Heart left ventricle (tissue), 16 donors: ENCODE measurements at regions of chr20 and their contacts with region 1.

Region 1: DNA sequence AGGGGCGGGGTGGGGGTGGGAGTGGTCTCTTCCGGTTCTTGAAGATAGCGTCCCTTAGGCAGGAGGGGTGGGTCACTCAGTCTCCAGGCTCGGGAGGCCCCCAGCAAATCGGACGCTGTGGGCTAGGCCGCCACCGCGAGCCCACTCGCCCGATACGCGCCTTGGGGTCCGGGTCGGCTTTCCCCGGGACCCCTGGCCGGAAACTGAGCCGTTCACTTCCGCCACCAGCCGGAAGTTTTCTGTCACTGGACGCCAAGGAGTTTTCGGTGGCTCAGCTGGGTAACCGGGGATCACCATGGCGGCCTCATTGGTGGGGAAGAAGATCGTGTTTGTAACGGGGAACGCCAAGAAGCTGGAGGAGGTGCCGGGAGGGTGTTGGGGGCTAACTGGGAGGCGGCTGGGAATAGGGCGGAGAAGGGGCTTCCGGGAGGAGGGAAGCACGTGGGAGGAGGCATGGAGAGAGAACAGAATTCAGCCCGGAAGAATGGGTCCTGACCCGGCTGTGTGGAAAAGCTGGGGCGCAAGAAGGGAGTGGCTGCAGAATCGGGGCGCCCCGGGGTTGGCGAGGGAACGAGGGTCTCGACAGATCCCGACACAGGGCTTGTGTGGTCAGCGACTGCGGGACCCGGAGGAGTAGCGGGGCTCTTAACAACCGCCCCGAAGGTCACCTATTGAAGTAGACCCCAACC is at the start of gene ITPA:
- DNase-seq: peak in 4 of 5 donors; percentile 45 to 57 (median 52)
- ATAC-seq: peak; percentile 18 to 67 (median 61)
- H3K4me3 ChIP-seq: peak within 1 kb of the TSS; percentile 74 to 95 (median 85)
- H3K27ac ChIP-seq: peak within 1 kb of the TSS; percentile 45 to 94 (median 84)
- H3K4me1 ChIP-seq: peaks cover 0 to 21% (median 9%) of the 10 kb centered on the region in 12 donors
- H3K27me3 ChIP-seq: no peaks in the 10 kb centered on the region
- CTCF ChIP-seq: peak in 1 of 12 donors; percentile 8
- POLR2A ChIP-seq: peak in 1 of 2 donors; percentile 31
- total RNA-seq, gene ITPA: 15.3 to 37.8 (median 20.6) TPM

Region 2: DNA sequence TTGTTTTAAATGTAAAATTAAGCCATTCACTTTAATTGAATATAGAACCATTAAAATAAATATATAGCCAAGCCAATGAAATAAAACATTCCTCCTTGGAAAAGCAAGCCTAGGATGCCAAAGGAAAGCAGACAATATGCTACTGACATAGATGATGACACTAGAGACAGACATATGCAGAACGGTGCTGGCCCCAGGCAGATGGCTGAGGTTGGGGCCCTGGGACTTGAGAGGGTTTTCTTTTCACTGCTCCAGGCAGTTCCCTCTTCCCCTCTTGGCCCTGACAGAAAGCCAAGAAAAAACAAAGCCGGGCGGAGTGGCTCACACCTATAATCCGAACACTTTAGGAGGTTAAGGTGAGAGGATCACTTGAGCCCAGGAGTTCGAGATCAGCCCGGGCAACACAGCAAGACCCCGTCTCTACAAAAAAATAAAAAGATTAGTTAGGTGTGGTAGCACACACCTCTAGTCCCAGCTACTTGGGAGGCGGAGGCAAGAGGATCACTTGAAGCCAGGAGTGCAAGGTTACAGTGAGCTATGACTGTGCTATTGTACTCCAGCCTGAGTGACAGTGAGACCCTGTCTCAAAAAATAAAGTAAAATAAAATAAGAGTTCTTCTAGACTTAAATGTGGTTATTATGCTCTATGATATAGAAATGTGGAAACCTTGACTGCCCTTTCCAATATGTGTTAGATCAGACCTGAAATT is 81.0 kb before region 1 on chr20:
- intact Hi-C with region 1: no loop called
- DNase-seq: no peak
- ATAC-seq: no peak
- H3K4me3 ChIP-seq: no peak overlapping the region
- H3K27ac ChIP-seq: no peak overlapping the region
- H3K4me1 ChIP-seq: peaks cover 0 to 15% (median 3%) of the 10 kb centered on the region in 12 donors
- H3K27me3 ChIP-seq: no peaks in the 10 kb centered on the region
- CTCF ChIP-seq: no peak
- POLR2A ChIP-seq: no peak

Region 3: GRCh38 chr20:3156811-3157619 is 52.4 kb before region 1 on chr20:
- intact Hi-C with region 1: no loop called
- DNase-seq: no peak
- ATAC-seq: no peak
- H3K4me3 ChIP-seq: peak overlapping the region in 2 of 12 donors; percentile 70 to 94
- H3K27ac ChIP-seq: peak overlapping the region in 2 of 12 donors; percentile 8 to 55
- H3K4me1 ChIP-seq: peaks cover 8 to 68% (median 47%) of the 10 kb centered on the region in 12 donors
- H3K27me3 ChIP-seq: no peaks in the 10 kb centered on the region
- CTCF ChIP-seq: no peak
- POLR2A ChIP-seq: no peak

Region 4: DNA sequence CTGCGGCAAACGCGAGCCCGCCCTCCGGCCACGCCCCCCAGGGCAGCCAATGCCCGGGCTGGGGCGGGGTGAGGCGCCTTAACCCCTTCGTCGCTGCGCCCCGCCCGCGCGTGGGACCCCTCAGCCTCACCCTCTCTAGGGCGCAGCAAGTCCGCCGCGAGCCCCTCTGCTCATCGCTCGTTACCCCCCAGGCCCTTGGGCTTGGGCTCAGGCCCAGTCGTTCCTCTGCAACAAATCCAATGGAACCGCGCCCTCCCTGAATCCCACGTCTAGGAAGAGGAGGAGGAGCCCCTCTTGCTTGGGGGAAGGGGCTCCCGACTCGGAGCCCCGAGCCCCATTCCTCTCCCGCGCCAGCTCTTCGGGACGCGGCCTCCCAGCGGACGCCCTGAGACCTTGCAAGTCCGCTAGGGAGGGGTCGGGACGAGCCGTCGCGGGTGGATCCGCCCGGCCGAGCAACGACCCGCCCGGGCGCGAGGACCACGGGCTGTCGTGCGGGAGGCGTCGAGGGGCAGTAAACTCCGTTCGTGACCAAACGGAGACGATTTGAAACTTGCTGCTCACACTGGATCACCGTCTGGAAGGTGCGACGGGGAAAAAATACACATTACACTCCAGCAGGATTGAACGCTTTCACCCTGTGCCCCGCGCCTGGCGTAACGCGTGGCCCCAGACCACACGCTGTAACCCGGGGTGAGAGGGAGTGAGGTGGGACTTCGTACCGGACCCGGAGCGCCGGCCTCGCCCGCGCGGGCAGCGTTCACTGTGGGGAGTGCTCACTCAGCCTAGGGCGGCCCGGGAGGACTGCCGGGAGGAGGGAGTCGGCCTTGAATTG is 35.6 kb before region 1 on chr20:
- intact Hi-C with region 1: loop called in 1 of 10 experiments (anchors 5 kb)
- DNase-seq: peak; percentile 91 to 95 (median 93)
- ATAC-seq: peak; percentile 79 to 97 (median 93)
- H3K4me3 ChIP-seq: peak overlapping the region; percentile 74 to 99 (median 92)
- H3K27ac ChIP-seq: peak overlapping the region in 11 of 12 donors; percentile 32 to 86 (median 75)
- H3K4me1 ChIP-seq: peaks cover 0 to 23% (median 13%) of the 10 kb centered on the region in 12 donors
- H3K27me3 ChIP-seq: peaks cover 0 to 19% (median 0%) of the 10 kb centered on the region in 9 donors
- CTCF ChIP-seq: peak in 3 of 12 donors; percentile 10 to 32 (median 13)
- POLR2A ChIP-seq: no peak

Region 5: GRCh38 chr20:3276680-3277015 is 67.2 kb after region 1 on chr20:
- intact Hi-C with region 1: no loop called
- DNase-seq: no peak
- ATAC-seq: peak in 3 of 4 donors; percentile 11 to 39 (median 14)
- H3K4me3 ChIP-seq: no peak overlapping the region
- H3K27ac ChIP-seq: no peak overlapping the region
- H3K4me1 ChIP-seq: peaks cover 0 to 14% (median 0%) of the 10 kb centered on the region in 12 donors
- H3K27me3 ChIP-seq: no peaks in the 10 kb centered on the region
- CTCF ChIP-seq: peak in 5 of 12 donors; percentile 15 to 23 (median 21)
- POLR2A ChIP-seq: no peak

Region 6: GRCh38 chr20:3390759-3391500 is 181.5 kb after region 1 on chr20:
- intact Hi-C with region 1: no loop called
- DNase-seq: peak in 2 of 5 donors; percentile 27 to 34
- ATAC-seq: peak; percentile 68 to 90 (median 88)
- H3K4me3 ChIP-seq: no peak overlapping the region
- H3K27ac ChIP-seq: peak overlapping the region in 3 of 12 donors; percentile 16 to 28 (median 25)
- H3K4me1 ChIP-seq: peaks cover 0 to 35% (median 18%) of the 10 kb centered on the region in 12 donors
- H3K27me3 ChIP-seq: no peaks in the 10 kb centered on the region
- CTCF ChIP-seq: no peak
- POLR2A ChIP-seq: no peak